ENCODE measurements at regions of chr18 and their contacts with region 1.

Region 1: DNA sequence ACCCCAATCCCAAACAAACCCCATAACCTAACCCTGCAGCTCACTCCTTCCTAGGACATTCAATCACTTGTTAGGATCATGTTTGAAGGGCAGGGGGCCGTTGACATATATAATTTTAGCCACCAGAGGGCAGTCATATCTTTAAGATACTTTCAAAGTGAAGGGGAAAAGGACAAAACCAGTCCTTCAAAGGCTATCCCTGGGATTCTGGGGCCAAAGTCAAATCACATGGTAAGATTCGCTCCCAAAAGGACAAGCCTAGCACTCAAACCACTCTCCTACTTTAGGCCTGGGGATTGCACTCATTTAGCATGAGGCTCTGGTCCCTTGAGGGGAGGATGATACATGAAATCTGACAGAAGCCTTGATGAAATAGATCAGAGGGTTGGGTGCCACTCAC is 44.6 kb downstream of the HAUS1 start:
- DNase-seq: peak; percentile 43 to 79
- H3K4me3 ChIP-seq: no peak overlapping the region
- H3K27ac ChIP-seq: no peak overlapping the region
- H3K4me1 ChIP-seq: peaks cover 10 to 17% (median 11%) of the 10 kb centered on the region in 4 experiments
- H3K27me3 ChIP-seq: no peaks in the 10 kb centered on the region
- CTCF ChIP-seq: peak in 2 of 3 experiments; percentile 57 to 73; a peak in 2 of 4 replicates
- EP300 ChIP-seq: no peak
- POLR2A ChIP-seq: no peak
- RAD21 ChIP-seq: peak; percentile 84

Region 2: DNA sequence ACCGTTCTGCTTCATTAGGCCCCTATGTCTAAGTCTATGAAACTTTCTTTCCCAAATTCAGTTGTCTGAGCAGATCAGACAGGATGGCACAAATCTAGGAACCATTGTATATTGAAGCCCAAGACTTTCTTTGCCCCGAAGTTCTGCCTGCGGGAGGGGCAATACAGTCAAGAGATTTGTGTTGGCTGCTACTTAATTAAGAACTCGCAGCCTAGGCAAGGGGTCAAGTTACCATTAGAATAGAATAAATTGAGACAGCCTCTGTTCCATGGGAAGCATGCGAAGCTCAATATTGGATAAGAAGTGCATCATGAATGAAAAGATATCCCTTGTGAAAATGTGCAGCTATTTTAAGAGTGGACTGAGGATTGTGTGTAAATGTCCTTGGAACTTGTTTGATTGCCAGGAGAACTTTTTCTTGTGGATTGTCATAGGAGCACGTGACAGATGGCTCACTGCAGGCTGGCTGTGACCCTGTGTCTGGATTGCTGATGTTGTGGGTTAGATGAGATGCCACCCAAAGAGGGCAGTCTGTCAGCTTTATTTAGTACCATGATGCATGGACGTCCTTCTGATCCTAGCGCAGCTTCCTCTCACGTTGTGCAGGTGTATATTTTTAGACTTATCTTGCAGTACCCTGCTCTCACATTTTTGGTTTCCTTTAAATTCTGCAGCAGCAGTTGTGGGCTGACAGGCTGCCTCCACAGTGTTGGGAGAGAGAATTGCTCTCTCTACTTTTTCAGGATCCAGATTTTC is 13.7 kb before region 1 on chr18:
- CTCF ChIA-PET with region 1: interaction called, 26 read pairs
- POLR2A ChIA-PET with region 1: interaction called, 14 read pairs
- DNase-seq: no peak
- H3K4me3 ChIP-seq: no peak overlapping the region
- H3K27ac ChIP-seq: no peak overlapping the region
- H3K4me1 ChIP-seq: peaks cover 0 to 6% (median 2%) of the 10 kb centered on the region in 4 experiments; a peak in 3 of 7 replicates
- H3K27me3 ChIP-seq: no peaks in the 10 kb centered on the region
- CTCF ChIP-seq: no peak
- EP300 ChIP-seq: no peak
- POLR2A ChIP-seq: no peak
- RAD21 ChIP-seq: no peak

Region 3: DNA sequence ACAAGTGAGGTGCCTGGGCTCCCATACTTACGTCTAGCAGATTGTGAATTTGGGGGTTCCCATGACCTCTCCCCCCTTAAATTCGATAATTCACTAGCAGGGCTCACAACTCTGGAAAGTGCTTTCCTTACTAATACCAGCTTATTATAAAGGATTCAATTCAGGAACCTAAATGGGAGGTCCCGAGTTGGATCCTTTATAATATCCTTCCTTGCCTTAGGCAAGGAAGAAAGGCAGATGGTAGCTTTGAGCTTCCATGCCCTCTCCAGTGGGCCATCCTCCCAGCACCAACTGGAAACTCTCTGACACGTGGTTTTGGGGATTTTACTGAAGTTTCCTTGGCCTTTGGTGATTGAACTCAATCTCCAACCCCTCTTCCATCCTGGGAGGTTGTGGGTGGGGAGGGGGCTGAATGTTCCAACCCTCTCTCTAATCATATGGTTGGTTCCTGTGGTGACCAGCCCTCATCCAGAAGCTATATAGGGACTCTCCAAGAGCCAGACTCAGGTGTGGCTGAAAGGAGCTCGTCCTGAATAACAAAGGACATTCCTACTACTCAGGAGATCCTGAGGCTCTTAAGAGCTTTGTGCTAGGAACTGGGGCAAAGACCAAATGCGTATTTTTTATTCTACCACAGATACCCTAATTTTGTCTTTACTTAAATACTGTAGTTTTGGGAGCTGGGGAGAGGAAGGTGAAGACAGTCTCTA is 17.6 kb after region 1 on chr18:
- CTCF ChIA-PET with region 1: interaction called, 114 read pairs
- POLR2A ChIA-PET with region 1: interaction called, 36 read pairs
- DNase-seq: no peak
- H3K4me3 ChIP-seq: no peak overlapping the region; a peak in 1 of 8 replicates
- H3K27ac ChIP-seq: no peak overlapping the region
- H3K4me1 ChIP-seq: peaks cover 4 to 8% (median 6%) of the 10 kb centered on the region in 4 experiments; a peak in 6 of 7 replicates
- H3K27me3 ChIP-seq: no peaks in the 10 kb centered on the region
- CTCF ChIP-seq: no peak
- EP300 ChIP-seq: peak in 1 of 2 experiments; percentile 31; a peak in 1 of 3 replicates
- POLR2A ChIP-seq: no peak
- RAD21 ChIP-seq: no peak

Region 4: DNA sequence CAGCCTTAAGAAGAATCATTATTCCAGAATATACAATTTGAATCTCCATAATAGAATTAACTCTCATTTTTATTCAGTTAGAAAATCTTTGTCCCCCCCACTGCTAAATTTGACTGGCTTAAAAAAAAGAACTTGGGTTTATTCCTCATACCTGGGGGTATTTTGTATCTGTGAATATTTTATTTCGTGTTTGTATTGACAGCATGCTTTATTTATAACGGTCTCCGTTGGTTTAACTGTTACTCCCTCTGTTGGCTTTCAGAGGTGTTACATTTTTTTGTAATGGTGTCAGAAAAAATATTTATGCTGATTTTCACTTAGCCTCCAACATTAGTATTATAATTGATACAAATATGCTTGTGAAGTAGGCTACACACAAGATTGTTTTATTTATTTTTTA is 64.5 kb after region 1 on chr18:
- CTCF ChIA-PET with region 1: interaction called, 28 read pairs
- POLR2A ChIA-PET with region 1: no interaction called
- DNase-seq: no peak
- H3K4me3 ChIP-seq: no peak overlapping the region
- H3K27ac ChIP-seq: no peak overlapping the region
- H3K4me1 ChIP-seq: no peaks in the 10 kb centered on the region
- H3K27me3 ChIP-seq: no peaks in the 10 kb centered on the region
- CTCF ChIP-seq: peak in 2 of 3 experiments; percentile 17 to 42; a peak in 2 of 4 replicates
- EP300 ChIP-seq: no peak
- POLR2A ChIP-seq: no peak
- RAD21 ChIP-seq: peak; percentile 34 to 42; a peak in 3 of 4 replicates

Measured in H1 (cell line).